Ovary (tissue), 10 donors: ENCODE measurements at regions of chr21 and their contacts with region 1.

Region 1: DNA sequence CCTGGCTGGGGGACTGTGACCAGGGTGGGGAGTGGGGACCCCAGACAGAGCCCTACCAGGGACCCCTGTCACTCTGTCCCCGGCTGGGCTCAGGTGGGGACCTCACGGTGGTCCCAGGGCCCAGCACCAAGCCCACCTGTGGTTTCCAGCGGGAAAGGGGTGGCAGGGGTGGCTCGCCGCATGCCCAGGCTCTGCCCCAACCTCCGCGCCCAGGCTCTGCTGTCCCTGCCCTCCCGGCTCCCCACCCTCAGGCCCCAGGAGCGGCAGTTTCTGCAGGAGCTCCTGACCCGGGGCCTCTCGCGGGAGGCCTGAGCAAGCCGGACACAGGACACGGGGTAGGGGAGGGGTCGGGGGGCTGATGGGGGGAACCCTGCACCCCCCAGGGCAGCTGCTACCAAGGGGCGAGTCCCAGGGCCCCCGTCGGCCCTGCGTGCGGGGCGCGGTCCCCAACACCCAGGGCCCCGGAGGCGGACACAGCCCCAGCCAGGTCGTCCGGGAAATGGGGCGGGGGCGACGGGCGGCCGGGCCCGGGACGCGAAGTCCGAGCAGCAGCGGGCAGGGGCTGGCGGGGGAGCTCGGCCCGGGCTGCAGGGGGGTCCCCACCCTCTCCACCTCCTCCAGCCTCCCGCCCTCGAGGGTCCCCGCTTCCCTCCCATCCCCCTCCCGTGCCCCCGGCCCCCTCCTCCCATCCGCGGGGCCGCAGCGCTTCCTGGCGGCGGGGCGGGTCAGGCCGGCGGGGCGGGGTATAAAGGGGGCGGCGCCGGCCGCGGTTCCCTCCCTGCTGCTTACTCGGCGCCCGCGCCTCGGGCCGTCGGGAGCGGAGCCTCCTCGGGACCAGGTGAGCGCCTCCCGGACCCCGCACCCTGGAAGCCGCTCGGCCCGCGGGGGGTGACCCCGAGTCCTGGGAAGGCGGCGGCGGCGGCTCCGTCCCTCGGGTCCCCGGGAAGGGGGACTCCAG is at the start of gene COL6A2:
- DNase-seq: peak; percentile 79 to 89 (median 85)
- H3K4me3 ChIP-seq: peak within 1 kb of the TSS; percentile 76
- H3K27ac ChIP-seq: peak within 1 kb of the TSS; percentile 75 to 94
- H3K4me1 ChIP-seq: peaks cover 7% of the 10 kb centered on the region
- H3K27me3 ChIP-seq: no peaks in the 10 kb centered on the region
- CTCF ChIP-seq: peak; percentile 16 to 53 (median 28)
- EP300 ChIP-seq: no peak
- POLR2A ChIP-seq: peak; percentile 85
- total RNA-seq, gene COL6A2: 222 to 1,092 (median 831) TPM

Region 2: DNA sequence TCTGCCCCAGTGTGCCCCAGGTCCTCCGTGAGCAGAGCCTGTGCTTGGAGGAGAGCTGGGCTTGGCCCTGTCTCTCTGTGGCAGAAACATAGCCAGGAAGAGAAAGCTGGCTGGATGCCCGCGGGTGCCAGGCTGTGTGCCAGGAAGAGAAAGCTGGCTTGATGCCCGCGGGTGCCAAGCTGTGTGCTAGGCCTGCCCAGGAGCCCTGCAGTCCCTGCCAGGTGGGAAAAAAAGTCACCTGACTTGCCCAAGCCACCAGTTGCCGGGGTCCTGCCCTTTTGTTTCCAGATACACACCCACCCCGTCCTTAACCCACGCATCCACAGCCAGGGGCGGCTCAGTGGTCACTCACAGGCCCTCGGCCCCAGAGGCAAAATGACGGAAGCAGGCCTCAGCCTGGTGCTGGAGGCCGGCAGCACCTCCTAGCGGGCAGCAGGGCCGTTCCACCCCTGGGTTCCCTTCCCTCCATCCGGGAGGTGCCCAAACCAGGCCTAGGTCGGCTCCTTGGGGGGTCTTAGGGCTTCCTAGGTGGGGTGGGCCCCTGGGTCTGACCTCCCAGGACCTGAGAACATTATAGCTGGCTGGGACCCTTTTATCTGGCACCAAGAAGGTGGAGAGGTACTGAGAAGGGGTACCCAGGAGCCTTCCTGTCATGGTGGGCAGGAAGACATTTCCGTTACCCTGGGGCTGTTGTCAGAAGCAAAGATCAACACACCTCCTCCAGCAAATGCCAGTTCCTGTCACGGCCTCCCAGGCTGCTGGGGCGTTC is 1186.0 kb before region 1 on chr21:
- intact Hi-C with region 1: no loop called
- DNase-seq: peak in 2 of 5 donors; percentile 52 to 57
- H3K4me3 ChIP-seq: no peak overlapping the region
- H3K27ac ChIP-seq: no peak overlapping the region
- H3K4me1 ChIP-seq: peaks cover 5% of the 10 kb centered on the region
- H3K27me3 ChIP-seq: no peaks in the 10 kb centered on the region
- CTCF ChIP-seq: no peak
- EP300 ChIP-seq: no peak
- POLR2A ChIP-seq: no peak

Region 3: DNA sequence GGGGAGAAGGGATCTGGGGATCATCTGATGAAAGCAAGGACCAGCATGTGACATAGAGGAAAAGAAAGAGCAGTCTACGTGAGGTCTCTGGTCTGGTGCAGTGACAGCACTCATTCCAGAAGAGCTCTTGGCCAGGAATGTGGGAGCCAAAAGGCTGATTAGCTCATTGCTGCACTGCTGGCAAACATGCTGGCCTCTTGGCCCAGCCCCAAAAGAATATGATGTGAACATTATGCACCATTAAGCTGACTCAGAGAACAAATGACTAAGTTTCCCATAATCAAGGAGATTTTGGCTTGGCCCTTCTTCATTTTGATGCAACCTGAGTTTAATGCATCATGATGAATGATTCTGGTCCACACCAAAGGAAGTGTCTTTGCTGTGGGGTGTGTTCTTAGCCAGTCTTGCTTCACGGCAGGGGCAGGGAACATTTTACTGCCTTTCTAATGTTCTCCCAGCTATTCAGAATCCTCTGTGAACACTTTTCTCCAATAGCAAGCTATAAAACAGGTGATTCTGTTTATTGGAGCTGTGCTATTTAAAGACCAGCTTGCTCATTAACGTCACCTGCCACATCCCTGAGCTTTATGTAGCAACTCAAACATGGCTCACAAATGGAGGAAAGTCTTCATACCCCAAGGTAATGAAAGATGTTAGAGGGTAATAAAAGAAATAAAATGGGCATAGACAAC is 399.0 kb before region 1 on chr21:
- intact Hi-C with region 1: no loop called
- DNase-seq: peak in 1 of 5 donors; percentile 45
- H3K4me3 ChIP-seq: no peak overlapping the region
- H3K27ac ChIP-seq: no peak overlapping the region
- H3K4me1 ChIP-seq: no peaks in the 10 kb centered on the region
- H3K27me3 ChIP-seq: no peaks in the 10 kb centered on the region
- CTCF ChIP-seq: no peak
- EP300 ChIP-seq: no peak
- POLR2A ChIP-seq: no peak

Region 4: GRCh38 chr21:46022551-46023525 is 74.8 kb before region 1 on chr21:
- intact Hi-C with region 1: loop called in 1 of 4 experiments (anchors 10 kb)
- DNase-seq: peak in 4 of 5 donors; percentile 40 to 64 (median 50)
- H3K4me3 ChIP-seq: no peak overlapping the region
- H3K27ac ChIP-seq: peak overlapping the region; percentile 1 to 44
- H3K4me1 ChIP-seq: peaks cover 18% of the 10 kb centered on the region
- H3K27me3 ChIP-seq: no peaks in the 10 kb centered on the region
- CTCF ChIP-seq: no peak
- EP300 ChIP-seq: no peak
- POLR2A ChIP-seq: no peak

Region 5: GRCh38 chr21:46056450-46056903 is 41.1 kb before region 1 on chr21:
- intact Hi-C with region 1: loop called in 3 of 4 experiments (anchors 2 to 5 kb)
- DNase-seq: peak; percentile 94 to 97 (median 95)
- H3K4me3 ChIP-seq: no peak overlapping the region
- H3K27ac ChIP-seq: peak overlapping the region; percentile 92 to 98
- H3K4me1 ChIP-seq: peaks cover 30% of the 10 kb centered on the region
- H3K27me3 ChIP-seq: no peaks in the 10 kb centered on the region
- CTCF ChIP-seq: no peak
- EP300 ChIP-seq: peak; percentile 79
- POLR2A ChIP-seq: peak; percentile 59